AG04450 (cell line): ENCODE measurements at regions of chr7 and their contacts with region 1.

Region 1: DNA sequence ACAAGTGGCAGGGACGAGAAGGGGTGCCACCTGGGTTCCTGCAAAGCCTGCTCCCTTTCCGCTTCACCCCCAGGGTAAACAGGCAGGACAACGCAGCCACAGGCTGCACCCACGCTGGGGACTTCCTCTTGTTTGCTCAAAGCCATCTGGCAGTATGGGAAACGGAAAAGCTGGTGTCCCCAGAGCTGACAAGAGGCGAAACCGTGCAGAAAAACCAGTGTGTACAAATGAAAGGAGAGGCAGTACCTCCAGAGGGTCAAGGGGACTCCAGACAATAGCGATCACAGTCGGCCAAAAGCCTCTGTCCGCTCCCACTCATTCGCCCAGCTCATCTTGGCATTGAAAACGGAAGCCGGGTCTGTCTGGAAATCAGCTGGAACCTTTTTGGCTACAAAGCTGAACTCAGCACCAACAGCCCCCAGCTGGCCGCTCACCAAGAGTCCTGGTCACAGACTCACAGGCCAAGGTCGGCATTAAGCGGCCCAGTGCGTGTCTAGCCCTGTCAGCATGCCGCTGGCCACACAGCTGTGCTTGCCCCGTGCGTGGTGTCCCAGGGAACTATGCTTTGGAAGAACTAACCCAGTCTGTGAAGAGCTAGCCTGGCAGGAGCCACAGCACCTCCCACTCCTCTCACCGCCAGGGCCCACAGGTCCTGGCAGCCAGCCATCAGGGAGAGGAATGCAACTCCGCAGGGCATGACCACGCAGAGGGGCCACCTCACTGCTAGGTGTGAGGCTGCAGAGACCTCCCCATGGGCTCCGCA is 10.4 kb downstream of the TNS3 start:
- DNase-seq: peak; percentile 67
- H3K4me3 ChIP-seq: peak overlapping the region; percentile 20
- H3K27ac ChIP-seq: peak overlapping the region; percentile 88
- H3K27me3 ChIP-seq: no peaks in the 10 kb centered on the region
- CTCF ChIP-seq: peak; percentile 16; the same call in 1 of the 2 replicates

Region 2: DNA sequence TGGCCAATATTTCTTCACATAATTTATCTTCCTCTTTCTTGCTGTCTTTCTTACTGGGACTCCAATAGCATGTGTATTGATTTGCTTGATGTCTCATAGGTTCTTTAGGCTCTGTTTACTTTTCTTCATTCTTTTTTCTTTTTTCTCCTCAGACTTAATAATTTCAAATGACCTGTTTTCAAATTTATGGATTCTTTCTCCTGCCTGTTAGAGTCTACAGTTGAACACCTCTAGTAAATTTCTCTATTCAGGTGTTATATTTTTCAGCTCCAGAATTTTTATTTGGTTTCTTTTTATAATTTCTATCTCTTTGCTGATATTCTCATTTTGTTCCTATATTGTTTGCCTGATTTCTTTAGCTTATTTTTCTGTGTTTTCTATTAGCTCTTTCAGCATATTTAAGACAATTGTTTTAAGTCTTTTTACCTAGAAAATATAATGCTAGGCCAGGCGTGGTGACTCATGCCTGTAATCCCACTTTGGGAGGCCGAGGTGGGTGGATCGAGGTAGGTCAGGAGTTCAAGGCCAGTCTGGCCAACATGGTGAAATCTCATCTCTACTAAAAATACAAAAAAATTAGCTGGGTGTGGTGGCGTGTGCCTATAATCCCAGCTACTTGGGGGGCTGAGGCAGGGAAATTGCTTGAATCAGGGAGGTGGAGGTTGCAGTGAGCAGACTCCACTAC is 72.3 kb after region 1 on chr7:
- CTCF ChIA-PET with region 1: no interaction called
- POLR2A ChIA-PET with region 1: interaction called, 10 read pairs
- DNase-seq: no peak
- H3K4me3 ChIP-seq: no peak overlapping the region
- H3K27ac ChIP-seq: no peak overlapping the region
- H3K27me3 ChIP-seq: no peaks in the 10 kb centered on the region
- CTCF ChIP-seq: no peak